SK-N-SH (cell line): ENCODE measurements at regions of chr10 and their contacts with region 1.

Region 1: DNA sequence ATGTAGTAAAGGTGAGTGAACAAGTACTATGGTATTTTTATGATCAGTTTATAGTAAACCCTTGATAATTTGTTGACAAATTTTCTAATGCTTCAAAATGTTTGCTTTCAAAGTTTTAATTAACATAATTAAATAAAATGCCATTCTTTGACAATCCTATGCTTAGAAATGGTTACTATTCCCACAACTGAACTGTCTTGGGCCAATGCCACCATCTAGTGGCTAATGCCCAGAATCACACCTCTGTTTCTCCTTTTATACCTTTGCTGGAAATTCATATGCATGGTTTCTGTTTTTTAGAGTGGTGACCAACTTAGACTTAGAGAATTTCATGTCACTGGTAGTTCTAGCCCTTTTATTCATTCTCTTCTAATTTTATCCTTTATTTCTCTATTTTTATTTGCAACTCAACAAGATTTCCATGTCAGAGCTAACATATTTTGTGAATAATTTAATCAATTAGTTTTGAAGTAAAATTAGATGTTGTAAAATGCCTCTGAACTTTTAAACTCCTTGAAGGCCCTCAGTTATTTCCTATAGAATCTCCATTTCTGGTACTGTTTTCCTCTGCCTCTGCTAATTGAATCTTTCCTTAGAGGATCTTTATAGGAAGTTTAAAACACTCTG is 31.1 kb downstream of the PCGF5 start:
- DNase-seq: peak; percentile 26
- H3K4me3 ChIP-seq: no peak overlapping the region
- H3K27ac ChIP-seq: no peak overlapping the region
- H3K4me1 ChIP-seq: peaks cover 3 to 9% of the 10 kb centered on the region in 2 experiments; a peak in 2 of 4 replicates
- H3K27me3 ChIP-seq: no peaks in the 10 kb centered on the region
- CTCF ChIP-seq: peak; percentile 98
- EP300 ChIP-seq: no peak
- RAD21 ChIP-seq: peak; percentile 98

Region 2: DNA sequence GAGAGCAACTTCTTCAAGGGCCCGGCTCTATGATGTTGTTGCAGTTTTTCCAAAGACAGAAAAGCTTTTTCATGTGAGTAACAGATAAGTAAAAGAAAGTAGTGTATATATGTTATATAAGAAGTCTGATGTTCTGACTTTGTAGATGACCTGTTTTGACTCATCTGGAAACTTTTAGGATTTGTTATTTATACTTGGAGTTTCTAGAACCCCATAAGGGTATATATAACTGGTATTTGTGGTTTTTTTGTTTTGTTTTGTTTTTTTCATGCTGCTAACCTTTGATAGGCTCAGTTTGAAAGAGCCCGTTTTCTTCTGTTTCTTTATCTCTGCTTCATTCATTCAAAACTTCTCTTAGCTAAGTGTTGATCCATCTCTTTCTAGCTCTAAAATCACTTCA is 372.5 kb before region 1 on chr10:
- CTCF ChIA-PET with region 1: interaction called, 19 read pairs
- POLR2A ChIA-PET with region 1: no interaction called
- DNase-seq: no peak
- H3K4me3 ChIP-seq: no peak overlapping the region
- H3K27ac ChIP-seq: no peak overlapping the region
- H3K4me1 ChIP-seq: peaks cover 0 to under 1% of the 10 kb centered on the region in 2 experiments; a peak in 2 of 4 replicates
- H3K27me3 ChIP-seq: no peaks in the 10 kb centered on the region
- CTCF ChIP-seq: no peak
- EP300 ChIP-seq: no peak
- RAD21 ChIP-seq: no peak

Region 3: DNA sequence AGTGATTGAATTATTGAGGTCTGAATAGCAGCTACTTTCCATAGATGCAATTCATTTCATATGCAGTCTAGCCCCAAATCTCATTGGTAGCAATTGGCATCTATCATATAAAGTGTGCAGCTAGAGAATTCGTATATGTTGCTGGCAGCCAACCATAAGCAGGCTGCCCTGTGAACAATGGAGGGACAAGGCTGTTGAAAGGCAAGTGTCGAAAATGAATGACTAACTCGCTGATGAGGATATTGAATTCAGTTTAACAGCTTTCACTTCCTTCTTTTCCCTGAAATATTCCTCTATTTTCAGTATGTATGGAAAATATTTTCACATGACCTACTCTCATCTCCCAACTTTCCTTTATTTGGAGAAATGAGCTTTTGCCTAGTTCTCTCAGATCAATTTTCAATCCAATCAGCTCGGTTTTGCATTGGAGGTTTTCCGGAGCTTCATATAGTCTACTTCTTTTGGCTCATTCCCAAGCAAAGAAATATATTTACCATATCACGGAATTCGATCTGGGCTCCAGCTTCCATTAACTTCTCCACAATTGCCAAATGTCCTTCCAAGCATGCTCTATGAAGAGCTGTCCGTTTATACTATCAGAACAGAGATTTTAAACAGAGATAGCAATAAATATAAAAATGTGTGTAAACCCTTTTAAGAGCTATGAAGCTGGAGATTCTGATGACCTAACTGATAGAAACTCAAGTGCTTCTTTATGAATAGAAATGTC is 334.1 kb before region 1 on chr10:
- CTCF ChIA-PET with region 1: interaction called, 124 read pairs
- POLR2A ChIA-PET with region 1: no interaction called
- DNase-seq: peak; percentile 11
- H3K4me3 ChIP-seq: peak overlapping the region in 1 of 2 experiments; percentile 31; a peak in 2 of 4 replicates
- H3K27ac ChIP-seq: peak overlapping the region; percentile 62 to 91; a peak in 3 of 4 replicates
- H3K4me1 ChIP-seq: peaks cover 10 to 17% of the 10 kb centered on the region in 2 experiments
- H3K27me3 ChIP-seq: no peaks in the 10 kb centered on the region
- CTCF ChIP-seq: no peak
- EP300 ChIP-seq: peak; percentile 71 to 92
- RAD21 ChIP-seq: no peak

Region 4: DNA sequence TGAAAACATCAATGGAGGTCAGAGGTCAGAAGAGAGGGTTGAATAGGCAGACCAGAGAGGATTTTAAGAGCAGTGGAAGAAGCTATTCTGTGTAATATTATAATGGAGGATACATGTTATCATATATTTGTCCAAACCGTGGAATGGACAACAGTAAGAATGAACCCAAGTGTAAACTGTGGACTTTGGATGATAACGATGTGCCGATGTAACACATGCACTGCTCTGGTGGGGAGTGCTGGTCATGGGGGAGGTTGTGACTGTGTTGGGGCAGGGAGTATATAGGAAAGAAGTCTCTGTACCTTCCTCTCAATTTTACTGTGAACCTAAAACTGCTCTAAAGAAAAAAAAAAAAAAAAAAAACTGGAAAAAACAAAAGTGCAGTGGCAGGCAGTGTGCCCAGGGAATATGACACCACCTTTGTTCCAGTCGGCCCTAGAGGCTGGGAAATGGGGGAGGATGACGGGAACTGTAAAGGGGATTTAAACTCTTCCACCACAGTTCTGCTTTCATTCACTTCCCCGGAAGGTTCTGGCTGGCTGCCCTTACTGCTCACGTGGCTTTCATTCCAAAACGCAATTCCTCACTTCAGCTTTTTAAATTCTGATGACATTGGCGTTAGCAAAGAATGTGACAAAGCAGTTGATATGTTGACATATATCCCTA is 216.9 kb before region 1 on chr10:
- CTCF ChIA-PET with region 1: interaction called, 10 read pairs
- POLR2A ChIA-PET with region 1: no interaction called
- DNase-seq: no peak
- H3K4me3 ChIP-seq: no peak overlapping the region
- H3K27ac ChIP-seq: peak overlapping the region in 1 of 2 experiments; percentile 89; a peak in 1 of 4 replicates
- H3K4me1 ChIP-seq: peaks cover 0 to 18% of the 10 kb centered on the region in 2 experiments; a peak in 2 of 4 replicates
- H3K27me3 ChIP-seq: no peaks in the 10 kb centered on the region
- CTCF ChIP-seq: no peak
- EP300 ChIP-seq: no peak
- RAD21 ChIP-seq: no peak

Region 5: DNA sequence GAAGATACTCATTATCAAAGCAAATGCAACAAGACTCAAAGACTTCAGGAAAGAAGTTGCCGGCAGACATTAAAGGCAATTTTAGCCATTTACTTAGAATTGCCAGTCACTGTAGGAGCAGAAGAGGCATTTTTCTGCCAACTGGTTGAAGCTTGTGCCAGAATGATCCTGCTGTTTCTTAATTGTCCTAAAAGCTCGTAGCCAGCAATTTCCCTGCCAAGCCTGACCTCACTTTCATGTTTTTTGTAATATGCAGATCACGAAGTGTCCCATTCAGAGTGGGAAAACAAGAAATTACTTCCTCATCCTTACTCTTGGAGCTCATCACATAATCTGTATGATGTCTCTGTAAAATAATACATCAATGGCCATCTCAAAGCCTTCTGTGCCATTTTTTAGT is 199.7 kb before region 1 on chr10:
- CTCF ChIA-PET with region 1: interaction called, 13 read pairs
- POLR2A ChIA-PET with region 1: no interaction called
- DNase-seq: no peak
- H3K4me3 ChIP-seq: no peak overlapping the region
- H3K27ac ChIP-seq: no peak overlapping the region
- H3K4me1 ChIP-seq: no peaks in the 10 kb centered on the region; a peak in 1 of 4 replicates
- H3K27me3 ChIP-seq: no peaks in the 10 kb centered on the region
- CTCF ChIP-seq: no peak
- EP300 ChIP-seq: no peak
- RAD21 ChIP-seq: no peak

Region 6: GRCh38 chr10:91335147-91335546 is 83.6 kb after region 1 on chr10:
- CTCF ChIA-PET with region 1: no interaction called
- POLR2A ChIA-PET with region 1: no interaction called
- DNase-seq: no peak
- H3K4me3 ChIP-seq: no peak overlapping the region
- H3K27ac ChIP-seq: no peak overlapping the region
- H3K4me1 ChIP-seq: peaks cover 0 to 5% of the 10 kb centered on the region in 2 experiments; a peak in 1 of 4 replicates
- H3K27me3 ChIP-seq: no peaks in the 10 kb centered on the region
- CTCF ChIP-seq: no peak
- EP300 ChIP-seq: no peak
- RAD21 ChIP-seq: no peak